ENCODE measurements at regions of chr2 and their contacts with region 1.

Region 1: GRCh38 chr2:204228169-204228886 is 291.8 kb downstream of the ICOS start:
- DNase-seq: no peak
- ATAC-seq: no peak
- H3K4me3 ChIP-seq: no peak overlapping the region
- H3K27ac ChIP-seq: no peak overlapping the region
- H3K4me1 ChIP-seq: peaks cover 2% of the 10 kb centered on the region; the same call in 1 of the 2 replicates
- H3K27me3 ChIP-seq: peaks cover 34% of the 10 kb centered on the region
- CTCF ChIP-seq: no peak
- POLR2A ChIP-seq: no peak
- RAD21 ChIP-seq: no peak

Region 2: DNA sequence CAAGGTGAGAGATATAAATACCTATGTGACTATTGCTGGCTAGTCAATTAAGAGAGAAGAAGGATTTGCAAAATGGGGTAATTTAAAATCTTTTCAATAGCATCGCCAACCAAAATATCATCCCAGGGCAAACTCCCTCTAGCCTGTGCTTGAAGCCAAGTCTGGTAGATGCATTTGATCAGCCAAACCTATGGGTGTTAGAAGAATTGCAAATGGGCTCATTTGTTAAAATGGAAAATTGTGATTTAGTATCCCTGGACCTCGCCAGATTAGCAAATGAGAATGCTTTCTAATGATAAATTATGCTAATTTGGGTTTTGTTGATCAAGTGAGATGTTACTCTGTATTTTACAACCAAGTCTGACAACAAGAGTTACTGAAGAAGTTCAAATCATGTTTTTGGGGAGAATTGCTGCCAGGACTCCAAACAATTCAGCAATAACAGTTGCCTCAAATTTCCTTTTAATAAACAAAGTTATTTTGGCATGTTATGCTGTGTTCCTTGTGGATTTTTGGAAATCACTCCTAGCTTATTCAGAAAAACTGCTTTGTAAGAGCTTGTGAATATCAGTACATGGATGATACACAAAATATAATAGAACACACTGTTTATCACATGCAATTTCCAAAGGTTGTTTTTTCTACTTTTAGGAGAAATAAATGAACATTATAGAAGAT is 44.4 kb after region 1 on chr2:
- CTCF ChIA-PET with region 1: interaction called, 10 read pairs
- POLR2A ChIA-PET with region 1: no interaction called
- dilution Hi-C with region 1: no loop called
- in situ Hi-C with region 1: no loop called
- intact Hi-C with region 1: no loop called
- DNase-seq: no peak
- ATAC-seq: no peak
- H3K4me3 ChIP-seq: no peak overlapping the region
- H3K27ac ChIP-seq: no peak overlapping the region
- H3K4me1 ChIP-seq: no peaks in the 10 kb centered on the region
- H3K27me3 ChIP-seq: peaks cover 9% of the 10 kb centered on the region
- CTCF ChIP-seq: no peak
- POLR2A ChIP-seq: no peak
- RAD21 ChIP-seq: no peak

Region 3: DNA sequence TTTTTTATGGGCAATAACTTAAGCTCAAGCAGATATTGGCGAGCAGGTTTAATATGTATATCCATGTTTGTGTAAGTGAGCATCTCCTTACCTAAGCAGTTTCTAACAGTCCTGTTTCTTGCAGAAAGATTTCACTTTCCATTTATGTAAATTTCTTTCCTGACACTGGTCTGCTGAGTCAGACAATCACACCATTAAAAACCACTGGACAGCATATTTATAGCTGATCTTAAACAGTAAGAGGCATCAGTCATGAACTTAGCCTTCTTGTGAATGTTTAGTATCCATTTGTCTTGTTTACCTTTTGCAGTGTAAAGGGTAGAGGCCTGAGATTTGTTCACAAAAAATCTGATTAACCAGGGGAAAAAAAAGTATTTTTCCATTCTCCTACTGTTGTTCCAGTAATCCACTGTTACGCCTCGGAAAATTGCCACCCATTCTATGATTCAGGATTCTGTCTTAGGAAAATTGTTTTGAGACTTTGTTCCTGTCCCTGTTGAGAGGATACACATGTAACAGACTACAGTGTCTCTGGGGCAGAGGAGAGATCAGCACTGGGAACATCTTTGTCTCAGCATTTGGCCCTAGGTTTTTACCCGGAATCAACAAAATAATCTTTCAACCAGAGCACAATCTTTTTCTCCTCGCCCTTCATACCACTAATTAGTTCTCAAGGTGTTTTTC is 933.0 kb after region 1 on chr2:
- CTCF ChIA-PET with region 1: no interaction called
- POLR2A ChIA-PET with region 1: no interaction called
- dilution Hi-C with region 1: no loop called
- in situ Hi-C with region 1: no loop called
- intact Hi-C with region 1: no loop called
- DNase-seq: peak; percentile 26
- ATAC-seq: peak; percentile 68
- H3K4me3 ChIP-seq: no peak overlapping the region
- H3K27ac ChIP-seq: no peak overlapping the region
- H3K4me1 ChIP-seq: peaks cover 3% of the 10 kb centered on the region; the same call in 1 of the 2 replicates
- H3K27me3 ChIP-seq: no peaks in the 10 kb centered on the region
- CTCF ChIP-seq: no peak
- POLR2A ChIP-seq: no peak
- RAD21 ChIP-seq: no peak